HEK293T (cell line): ENCODE measurements at regions of chr11 and their contacts with region 1.

Region 1: DNA sequence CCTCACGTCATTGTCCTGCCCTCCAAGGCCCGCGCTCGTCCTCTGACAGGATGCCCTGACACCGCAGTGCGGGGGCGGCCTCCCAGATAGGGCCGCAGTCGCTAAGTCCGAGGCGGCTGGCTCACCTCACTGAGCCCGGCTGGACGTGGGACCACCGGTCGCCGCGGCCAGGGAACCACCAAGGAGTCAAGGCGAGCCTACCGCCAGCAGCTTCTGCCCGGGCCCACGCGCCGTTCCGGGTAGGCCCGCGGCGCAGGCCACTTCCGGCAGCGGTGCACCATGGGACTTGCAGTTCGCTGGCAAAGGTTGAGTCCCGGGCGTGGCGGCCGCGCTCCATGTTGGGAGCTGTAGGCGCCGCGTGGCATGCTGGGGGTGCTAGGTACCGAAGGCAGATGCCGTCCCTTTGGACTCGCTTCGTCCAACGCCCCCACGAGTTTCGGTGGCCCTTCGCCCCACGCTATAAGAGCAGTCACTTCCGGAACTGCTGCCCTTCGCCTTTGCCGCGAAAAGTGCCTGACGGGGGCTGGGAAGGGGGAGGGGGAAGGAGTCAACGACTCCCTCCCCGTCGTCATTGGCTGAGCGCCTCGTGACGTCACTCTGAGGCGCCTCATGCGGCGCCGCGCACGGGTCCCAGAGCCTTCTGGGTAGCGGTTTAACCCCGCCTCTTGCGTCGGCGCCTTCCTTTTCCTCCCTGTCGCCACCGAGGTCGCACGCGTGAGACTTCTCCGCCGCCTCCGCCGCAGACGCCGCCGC is at the start of gene RPLP2:
- DNase-seq: peak; percentile 94

Region 2: GRCh38 chr11:767238-767637 is 42.2 kb before region 1 on chr11:
- CTCF ChIA-PET with region 1: no interaction called
- POLR2A ChIA-PET with region 1: no interaction called
- DNase-seq: no peak

Region 3: GRCh38 chr11:798093-798713 is 11.3 kb before region 1 on chr11 and contains the start of gene SLC25A22:
- CTCF ChIA-PET with region 1: no interaction called
- POLR2A ChIA-PET with region 1: interaction called, 12 read pairs
- DNase-seq: peak; percentile 91

Region 4: DNA sequence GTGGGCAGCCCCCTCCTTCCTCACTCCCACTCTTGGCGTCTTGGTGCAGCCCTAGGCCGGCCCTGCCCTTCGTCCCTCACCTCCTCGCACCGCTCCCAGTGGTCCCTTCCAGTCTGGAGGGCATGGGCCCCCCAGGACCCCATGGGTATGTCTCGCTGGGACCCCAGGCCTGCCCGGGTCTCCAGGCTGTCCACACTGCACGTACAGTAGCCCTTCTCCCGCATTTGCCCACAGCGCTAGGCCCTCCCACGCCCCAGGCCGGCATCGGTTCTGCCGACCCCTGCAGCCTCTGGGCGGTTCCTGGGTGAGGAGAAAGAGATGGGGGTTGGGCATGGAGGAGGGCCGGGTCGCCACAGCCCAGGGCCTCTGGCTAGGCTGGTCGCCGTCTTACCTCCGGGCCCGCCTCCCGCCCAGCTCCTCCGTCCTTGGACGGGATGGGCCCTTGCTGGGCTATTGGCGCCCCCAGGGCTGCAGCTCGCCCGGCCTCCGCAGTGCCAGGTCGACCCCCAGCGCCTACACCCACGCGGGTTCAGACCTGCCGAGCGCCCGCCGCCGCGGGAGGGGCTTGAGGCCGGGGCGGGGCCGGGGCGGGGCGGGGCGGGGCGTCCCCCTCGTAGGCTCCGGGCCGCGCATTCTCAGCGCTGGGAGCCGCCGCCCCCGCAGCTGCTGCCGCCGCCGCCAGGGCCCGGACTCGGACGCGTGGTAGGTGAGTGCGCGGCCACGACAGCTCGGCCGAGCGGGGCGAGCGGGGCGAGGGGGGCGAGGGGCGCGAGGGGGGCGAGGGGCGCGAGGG is 23.1 kb after region 1 on chr11 and contains the start of gene CD151:
- CTCF ChIA-PET with region 1: no interaction called
- POLR2A ChIA-PET with region 1: interaction called, 11 read pairs
- DNase-seq: peak; percentile 64

Region 5: GRCh38 chr11:842370-843002 is 33.0 kb after region 1 on chr11 and contains the starts of genes POLR2L and TSPAN4:
- CTCF ChIA-PET with region 1: interaction called, 3 read pairs
- POLR2A ChIA-PET with region 1: interaction called, 11 read pairs
- DNase-seq: peak; percentile 85

Region 6: DNA sequence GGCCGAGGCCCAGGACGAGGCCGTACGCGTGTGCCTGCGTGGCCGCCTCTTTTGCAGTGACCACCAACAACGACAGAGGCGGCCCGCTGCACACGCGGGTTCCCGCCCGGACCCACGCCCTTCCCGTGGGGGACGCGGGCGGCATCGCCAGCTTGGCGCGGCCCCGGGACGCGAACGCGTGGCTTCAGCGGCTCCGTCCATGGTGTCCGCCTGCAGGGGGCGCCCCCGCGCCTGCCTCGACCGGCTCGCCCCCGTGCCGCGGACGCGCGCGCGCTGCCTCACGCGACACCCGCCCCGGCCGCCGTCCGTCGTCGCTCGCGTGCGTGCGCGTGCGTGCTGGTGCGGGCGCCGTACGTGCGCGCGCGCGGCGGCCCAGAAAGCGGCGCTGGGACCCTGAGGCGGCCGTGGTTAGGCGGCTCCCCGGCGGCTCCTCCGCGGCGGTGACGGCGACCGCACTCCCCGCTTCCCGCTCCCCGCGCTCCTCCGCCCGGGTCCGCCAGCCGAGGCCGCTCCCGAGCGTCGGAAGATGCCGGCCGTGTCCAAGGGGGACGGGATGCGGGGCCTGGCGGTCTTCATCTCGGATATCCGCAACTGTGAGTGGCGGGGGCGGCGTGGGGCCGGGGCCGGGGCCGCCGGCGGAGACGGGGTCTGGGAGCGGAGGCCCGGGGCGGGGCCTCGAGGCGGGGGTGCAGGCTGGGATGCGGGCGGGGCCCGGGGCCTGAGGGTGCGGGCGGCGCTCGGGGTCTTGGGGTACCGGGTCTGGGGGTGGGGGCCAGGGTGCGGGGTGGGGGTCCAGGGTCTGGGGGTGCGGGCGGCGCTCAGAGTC is 116.2 kb after region 1 on chr11 and contains the start of gene AP2A2:
- CTCF ChIA-PET with region 1: no interaction called
- POLR2A ChIA-PET with region 1: no interaction called
- DNase-seq: peak; percentile 97

Region 7: GRCh38 chr11:940496-941135 is 131.2 kb after region 1 on chr11:
- CTCF ChIA-PET with region 1: no interaction called
- POLR2A ChIA-PET with region 1: no interaction called
- DNase-seq: no peak